Thyroid gland (tissue), 4 donors: ENCODE measurements at regions of chr11 and their contacts with region 1.

Region 1: GRCh38 chr11:11787305-11788062 is 54.3 kb upstream of the USP47 start:
- DNase-seq: peak; percentile 74 to 82
- H3K4me3 ChIP-seq: no peak overlapping the region
- H3K27ac ChIP-seq: no peak overlapping the region
- H3K4me1 ChIP-seq: no peaks in the 10 kb centered on the region
- H3K27me3 ChIP-seq: no peaks in the 10 kb centered on the region
- CTCF ChIP-seq: peak; percentile 65 to 94 (median 88)
- POLR2A ChIP-seq: no peak

Region 2: DNA sequence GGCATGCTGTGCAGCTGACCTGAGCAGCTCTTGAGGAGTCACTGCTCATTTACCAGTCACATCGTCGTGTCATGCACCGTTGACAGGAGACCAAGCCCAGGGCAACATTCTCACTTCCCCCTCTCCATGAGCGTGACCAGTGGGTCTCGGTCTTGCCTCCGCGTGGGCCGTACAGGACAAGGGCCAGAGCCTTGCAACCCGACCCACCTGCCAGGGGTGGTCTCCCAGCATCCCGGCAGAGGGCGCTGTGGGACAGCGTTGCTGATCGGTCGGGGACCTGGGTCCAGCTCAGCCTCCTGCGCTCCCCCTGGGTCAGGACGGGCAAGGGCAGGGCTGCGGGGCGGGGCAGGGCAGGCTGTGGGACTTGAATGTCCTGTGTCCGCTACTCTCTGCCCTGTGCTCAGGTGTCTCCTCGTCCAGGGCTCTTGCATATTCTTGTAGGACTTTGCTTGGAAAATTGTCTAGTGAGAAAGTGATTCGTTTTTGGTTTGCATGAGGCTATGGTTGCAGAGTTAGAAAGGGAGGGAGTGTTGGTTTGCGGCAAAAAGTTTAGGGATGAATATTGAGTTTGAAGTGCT is 995.0 kb before region 1 on chr11:
- intact Hi-C with region 1: loop called (anchors 10 kb)
- DNase-seq: peak; percentile 90 to 91
- H3K4me3 ChIP-seq: no peak overlapping the region
- H3K27ac ChIP-seq: no peak overlapping the region
- H3K4me1 ChIP-seq: peaks cover 2 to 6% of the 10 kb centered on the region in 2 donors
- H3K27me3 ChIP-seq: no peaks in the 10 kb centered on the region
- CTCF ChIP-seq: peak; percentile 70 to 97 (median 92)
- POLR2A ChIP-seq: no peak

Region 3: GRCh38 chr11:11028017-11028692 is 759.3 kb before region 1 on chr11:
- intact Hi-C with region 1: loop called (anchors 2 kb)
- DNase-seq: peak; percentile 75 to 82
- H3K4me3 ChIP-seq: no peak overlapping the region
- H3K27ac ChIP-seq: no peak overlapping the region
- H3K4me1 ChIP-seq: no peaks in the 10 kb centered on the region
- H3K27me3 ChIP-seq: no peaks in the 10 kb centered on the region
- CTCF ChIP-seq: peak; percentile 40 to 78 (median 74)
- POLR2A ChIP-seq: no peak

Region 4: DNA sequence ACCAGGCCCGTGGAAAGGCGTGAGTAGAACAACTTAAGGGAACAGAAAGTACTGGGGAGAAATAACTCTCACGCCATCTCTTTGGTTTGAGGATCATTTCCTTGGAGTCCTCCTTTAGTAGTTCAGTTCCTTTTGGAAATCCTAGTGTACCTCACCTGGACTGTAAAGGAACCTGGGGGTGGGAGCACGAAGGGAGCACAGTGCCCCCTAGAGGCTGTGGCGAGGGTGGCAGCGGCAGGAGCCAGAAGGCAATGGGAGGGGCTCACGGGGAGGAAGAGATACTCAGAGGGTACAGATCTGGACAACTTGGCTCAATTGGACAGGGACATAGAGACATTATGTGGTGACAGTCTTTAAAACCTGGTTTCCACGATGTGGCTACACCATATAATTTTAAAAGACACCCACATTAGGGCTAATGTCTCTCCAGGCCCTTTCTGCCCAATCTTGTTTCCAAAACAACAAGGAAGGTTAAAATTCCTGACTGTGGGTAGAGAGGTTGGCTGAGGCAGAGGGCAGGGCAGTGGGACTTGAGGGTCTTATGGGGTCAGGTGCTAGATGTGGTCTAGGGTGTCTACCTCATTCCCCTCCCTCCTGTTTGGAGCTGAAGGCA is 521.4 kb before region 1 on chr11:
- intact Hi-C with region 1: loop called (anchors 10 kb)
- DNase-seq: peak; percentile 64 to 65
- H3K4me3 ChIP-seq: no peak overlapping the region
- H3K27ac ChIP-seq: no peak overlapping the region
- H3K4me1 ChIP-seq: peaks cover 14 to 16% of the 10 kb centered on the region in 2 donors
- H3K27me3 ChIP-seq: no peaks in the 10 kb centered on the region
- CTCF ChIP-seq: peak; percentile 65 to 89 (median 82)
- POLR2A ChIP-seq: no peak

Region 5: GRCh38 chr11:11621573-11622319 is 165.7 kb before region 1 on chr11 and contains the start of gene GALNT18:
- intact Hi-C with region 1: loop called (anchors 5 kb)
- DNase-seq: peak; percentile 96
- H3K4me3 ChIP-seq: peak within 1 kb of the TSS; percentile 25 to 79 (median 73)
- H3K27ac ChIP-seq: peak within 1 kb of the TSS; percentile 75 to 86 (median 82)
- H3K4me1 ChIP-seq: peaks cover 25 to 50% of the 10 kb centered on the region in 2 donors
- H3K27me3 ChIP-seq: no peaks in the 10 kb centered on the region
- CTCF ChIP-seq: peak in 5 of 6 experiments; percentile 12 to 50 (median 43)
- POLR2A ChIP-seq: peak; percentile 69 to 98
- total RNA-seq, gene GALNT18: 60.7 to 93.8 (median 87.5) TPM